Activated CD4-positive, alpha-beta T cell treated with anti-CD3 and anti-CD28 coated beads, Interleukin-2, amount 10 ng/mL, durations not matched to agents 24 days and 14 days (primary cell): ENCODE measurements at regions of chr18 and their contacts with region 1.

Region 1: GRCh38 chr18:51197661-51198424 is at the start of gene MEX3C:
- DNase-seq: peak; percentile 100
- H3K4me3 Mint-ChIP-seq: peak within 1 kb of the TSS; percentile 94
- H3K27ac Mint-ChIP-seq: peak within 1 kb of the TSS; percentile 98
- H3K4me1 Mint-ChIP-seq: peaks cover 21% of the 10 kb centered on the region
- H3K27me3 Mint-ChIP-seq: no peaks in the 10 kb centered on the region
- total RNA-seq, gene MEX3C: 57.4 and 62.6 TPM in 2 replicates

Region 2: DNA sequence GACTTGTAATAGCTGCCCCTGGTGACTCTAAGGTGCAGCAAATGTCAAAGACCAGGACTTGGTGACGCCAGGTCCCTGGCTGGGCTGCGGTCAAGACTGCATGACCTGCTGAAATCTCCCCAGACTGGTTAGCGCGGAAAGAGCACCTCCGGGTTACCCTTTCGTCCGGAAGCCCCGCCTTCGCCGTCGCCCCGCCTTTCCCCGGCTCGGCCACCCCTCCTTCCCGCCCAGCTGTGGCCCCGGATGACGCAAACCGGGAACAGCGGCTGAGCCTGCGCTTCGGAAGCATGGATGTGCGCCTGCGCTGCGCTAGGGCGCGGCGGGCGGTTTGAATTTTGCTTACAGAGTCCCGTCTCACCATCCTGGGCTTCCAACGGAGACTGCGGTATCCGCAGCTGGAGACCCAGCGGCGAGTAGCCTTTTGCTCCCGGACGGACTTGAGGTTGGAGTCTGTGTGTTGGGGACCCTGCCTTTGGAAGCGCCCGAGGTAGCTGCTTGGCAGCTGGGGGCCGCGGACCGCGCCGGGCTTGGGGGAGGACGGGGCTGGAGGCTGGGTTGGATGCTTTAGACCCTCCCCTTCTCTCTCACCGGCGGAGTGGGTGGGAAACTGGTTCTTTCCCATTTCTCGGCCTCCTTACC is 823.0 kb before region 1 on chr18 and contains the start of gene SKA1:
- intact Hi-C with region 1: loop called (anchors 2 kb)
- DNase-seq: peak; percentile 98
- H3K4me3 Mint-ChIP-seq: peak within 1 kb of the TSS; percentile 90
- H3K27ac Mint-ChIP-seq: peak within 1 kb of the TSS; percentile 89
- H3K4me1 Mint-ChIP-seq: peaks cover 15% of the 10 kb centered on the region
- H3K27me3 Mint-ChIP-seq: peaks cover 6% of the 10 kb centered on the region
- total RNA-seq, gene SKA1: 20.0 and 22.1 TPM in 2 replicates

Region 3: GRCh38 chr18:50967714-50968661 is 229.9 kb before region 1 on chr18 and contains the start of gene ELAC1:
- intact Hi-C with region 1: loop called (anchors 2 kb)
- DNase-seq: peak; percentile 91
- H3K4me3 Mint-ChIP-seq: peak within 1 kb of the TSS; percentile 97
- H3K27ac Mint-ChIP-seq: peak within 1 kb of the TSS; percentile 97
- H3K4me1 Mint-ChIP-seq: peaks cover 22% of the 10 kb centered on the region
- H3K27me3 Mint-ChIP-seq: peaks cover 2% of the 10 kb centered on the region
- total RNA-seq, gene ELAC1: 6.8 and 7.0 TPM in 2 replicates

Region 4: DNA sequence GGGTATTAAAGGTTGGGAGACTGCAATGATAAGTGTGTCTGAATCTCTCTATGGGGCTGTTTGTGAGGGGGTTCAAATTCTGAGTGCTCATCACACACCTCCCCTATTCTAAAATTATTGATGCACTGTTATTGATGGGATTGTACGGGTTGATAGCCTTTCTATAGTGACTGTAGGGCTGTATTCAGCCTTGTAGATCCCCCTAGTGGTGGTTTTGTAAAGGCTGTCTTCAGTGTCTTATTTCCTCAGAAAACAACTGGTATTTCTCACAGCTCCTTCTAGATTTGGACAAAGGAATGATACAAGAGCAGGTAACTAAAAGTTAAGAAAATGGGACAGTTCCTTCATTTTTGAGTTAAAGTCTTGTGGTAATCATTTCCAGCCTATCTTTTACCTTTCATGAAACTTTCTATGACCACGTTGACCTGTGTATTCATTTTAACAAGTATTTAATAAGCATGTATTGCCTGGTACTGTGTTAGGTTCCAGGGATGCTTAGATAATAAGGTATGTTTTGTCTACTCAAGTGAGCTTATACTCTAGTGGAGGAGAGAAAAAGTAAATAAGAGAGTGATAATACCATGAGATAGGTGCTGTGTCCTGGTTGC is 146.6 kb before region 1 on chr18:
- intact Hi-C with region 1: loop called (anchors 5 kb)
- DNase-seq: peak; percentile 76
- H3K4me3 Mint-ChIP-seq: no peak overlapping the region
- H3K27ac Mint-ChIP-seq: peak overlapping the region; percentile 34
- H3K4me1 Mint-ChIP-seq: peaks cover 29% of the 10 kb centered on the region
- H3K27me3 Mint-ChIP-seq: no peaks in the 10 kb centered on the region

Region 5: DNA sequence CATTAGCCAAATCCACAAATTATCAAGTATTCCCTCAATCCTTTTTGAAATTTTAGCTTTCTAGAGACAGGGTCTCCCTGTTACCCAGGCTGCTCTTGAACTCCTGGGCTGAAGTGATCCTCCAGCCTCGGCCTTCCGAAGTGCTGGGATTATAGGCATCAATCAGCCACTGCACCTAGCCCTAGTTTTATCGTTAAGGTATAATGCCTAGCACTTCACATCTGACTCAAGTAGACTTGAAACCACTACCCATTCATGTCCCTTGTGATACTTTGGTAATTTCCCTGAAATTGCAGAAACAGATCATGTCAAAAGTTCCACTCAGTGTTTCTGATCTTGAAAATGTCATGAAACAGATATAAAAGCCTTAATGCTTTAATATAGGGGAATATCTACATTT is 26.6 kb before region 1 on chr18:
- intact Hi-C with region 1: loop called (anchors 1 kb)
- DNase-seq: peak; percentile 66
- H3K4me3 Mint-ChIP-seq: peak overlapping the region; percentile 69
- H3K27ac Mint-ChIP-seq: peak overlapping the region; percentile 97
- H3K4me1 Mint-ChIP-seq: peaks cover 54% of the 10 kb centered on the region
- H3K27me3 Mint-ChIP-seq: no peaks in the 10 kb centered on the region

Region 6: GRCh38 chr18:51235011-51235789 is 37.4 kb after region 1 on chr18:
- intact Hi-C with region 1: loop called (anchors 5 kb)
- DNase-seq: peak; percentile 65
- H3K4me3 Mint-ChIP-seq: peak overlapping the region; percentile 10
- H3K27ac Mint-ChIP-seq: peak overlapping the region; percentile 34
- H3K4me1 Mint-ChIP-seq: peaks cover 19% of the 10 kb centered on the region
- H3K27me3 Mint-ChIP-seq: no peaks in the 10 kb centered on the region